Activated CD8-positive, alpha-beta T cell treated with anti-CD3 and anti-CD28 coated beads, Interleukin-2, amount 10 ng/mL, durations not matched to agents 7 days and 5 days (primary cell): ENCODE measurements at regions of chr11 and their contacts with region 1.

Region 1: GRCh38 chr11:11028017-11028692 is 170.3 kb upstream of the ZBED5 start:
- DNase-seq: peak; percentile 84
- ATAC-seq: peak; percentile 91
- H3K4me3 Mint-ChIP-seq: no peak overlapping the region
- H3K27ac Mint-ChIP-seq: no peak overlapping the region
- H3K4me1 Mint-ChIP-seq: no peaks in the 10 kb centered on the region
- H3K27me3 Mint-ChIP-seq: peaks cover 19% of the 10 kb centered on the region

Region 2: DNA sequence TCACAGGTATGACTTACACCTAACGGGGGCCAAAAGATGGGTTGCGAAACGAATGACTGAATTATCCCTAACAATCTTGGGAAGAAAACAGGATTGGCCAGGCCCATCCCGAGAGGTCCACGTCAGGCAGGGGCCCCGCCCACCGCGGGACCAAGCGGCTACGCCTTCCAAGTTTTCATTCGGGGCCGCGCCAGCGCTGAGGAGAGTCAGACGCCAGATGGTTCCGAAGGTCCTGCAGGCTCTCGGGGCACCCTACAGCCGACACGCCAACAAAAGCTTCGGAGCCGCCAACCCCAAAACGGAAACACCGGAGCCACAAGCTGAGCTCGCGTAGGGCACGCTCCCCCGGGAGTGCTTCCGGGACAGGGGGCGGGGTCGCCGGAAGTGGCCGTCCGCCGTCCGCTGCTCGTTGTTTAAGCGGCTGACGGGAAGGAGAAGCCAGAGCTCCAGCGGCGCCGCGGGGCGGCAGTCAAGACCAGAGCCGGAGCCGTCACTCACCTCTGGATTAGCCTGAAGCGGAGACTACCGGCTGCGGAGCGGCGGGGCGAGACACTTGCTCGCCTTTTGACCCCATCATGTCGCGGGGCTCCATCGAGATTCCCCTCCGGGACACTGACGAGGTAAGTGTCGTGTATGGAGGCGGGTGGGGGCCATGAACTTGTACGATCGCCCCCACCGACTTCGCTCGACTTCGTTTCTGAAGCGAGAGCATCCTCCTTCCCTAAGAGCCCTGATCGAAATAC is 277.1 kb before region 1 on chr11 and contains the start of gene CTR9:
- CTCF ChIA-PET with region 1: no interaction called
- POLR2A ChIA-PET with region 1: no interaction called
- DNase-seq: peak; percentile 94
- ATAC-seq: peak; percentile 90
- H3K4me3 Mint-ChIP-seq: peak within 1 kb of the TSS; percentile 95
- H3K27ac Mint-ChIP-seq: peak within 1 kb of the TSS; percentile 89
- H3K4me1 Mint-ChIP-seq: peaks cover 31% of the 10 kb centered on the region
- H3K27me3 Mint-ChIP-seq: no peaks in the 10 kb centered on the region
- total RNA-seq, gene CTR9: 43.4 to 44.0 TPM

Region 3: GRCh38 chr11:10933455-10934292 is 94.5 kb before region 1 on chr11:
- CTCF ChIA-PET with region 1: interaction called, 38 read pairs
- POLR2A ChIA-PET with region 1: no interaction called
- DNase-seq: peak; percentile 85
- ATAC-seq: peak; percentile 79
- H3K4me3 Mint-ChIP-seq: peak overlapping the region; percentile 70
- H3K27ac Mint-ChIP-seq: no peak overlapping the region
- H3K4me1 Mint-ChIP-seq: peaks cover 18% of the 10 kb centered on the region
- H3K27me3 Mint-ChIP-seq: peaks cover 43% of the 10 kb centered on the region

Region 4: GRCh38 chr11:11016068-11016467 is 12.1 kb before region 1 on chr11:
- CTCF ChIA-PET with region 1: interaction called, 14 read pairs
- POLR2A ChIA-PET with region 1: interaction called, 3 read pairs
- DNase-seq: no peak
- ATAC-seq: no peak
- H3K4me3 Mint-ChIP-seq: no peak overlapping the region
- H3K27ac Mint-ChIP-seq: no peak overlapping the region
- H3K4me1 Mint-ChIP-seq: no peaks in the 10 kb centered on the region
- H3K27me3 Mint-ChIP-seq: peaks cover 27% of the 10 kb centered on the region

Region 5: DNA sequence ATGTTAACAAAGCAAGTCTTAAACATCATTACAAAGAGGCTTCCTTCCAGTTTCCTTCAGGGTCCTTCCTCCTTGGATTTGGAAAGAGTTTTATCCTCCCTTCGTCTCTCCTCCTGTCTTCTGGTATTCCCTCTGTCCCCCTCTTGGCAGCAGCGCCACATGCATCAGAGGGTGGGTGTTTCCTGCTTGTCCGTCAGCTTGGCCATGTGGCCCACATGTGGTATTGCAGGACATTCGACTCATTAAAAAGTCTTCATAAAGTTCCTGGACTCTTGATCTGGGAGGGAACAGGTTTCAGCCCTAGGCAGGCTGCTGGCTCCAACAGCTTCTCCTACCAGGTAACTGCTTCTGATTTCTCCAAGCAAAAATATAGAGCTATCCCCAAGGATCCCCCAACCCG is 135.1 kb after region 1 on chr11:
- CTCF ChIA-PET with region 1: interaction called, 51 read pairs
- POLR2A ChIA-PET with region 1: no interaction called
- DNase-seq: no peak
- ATAC-seq: no peak
- H3K4me3 Mint-ChIP-seq: no peak overlapping the region
- H3K27ac Mint-ChIP-seq: no peak overlapping the region
- H3K4me1 Mint-ChIP-seq: no peaks in the 10 kb centered on the region
- H3K27me3 Mint-ChIP-seq: peaks cover 23% of the 10 kb centered on the region

Region 6: DNA sequence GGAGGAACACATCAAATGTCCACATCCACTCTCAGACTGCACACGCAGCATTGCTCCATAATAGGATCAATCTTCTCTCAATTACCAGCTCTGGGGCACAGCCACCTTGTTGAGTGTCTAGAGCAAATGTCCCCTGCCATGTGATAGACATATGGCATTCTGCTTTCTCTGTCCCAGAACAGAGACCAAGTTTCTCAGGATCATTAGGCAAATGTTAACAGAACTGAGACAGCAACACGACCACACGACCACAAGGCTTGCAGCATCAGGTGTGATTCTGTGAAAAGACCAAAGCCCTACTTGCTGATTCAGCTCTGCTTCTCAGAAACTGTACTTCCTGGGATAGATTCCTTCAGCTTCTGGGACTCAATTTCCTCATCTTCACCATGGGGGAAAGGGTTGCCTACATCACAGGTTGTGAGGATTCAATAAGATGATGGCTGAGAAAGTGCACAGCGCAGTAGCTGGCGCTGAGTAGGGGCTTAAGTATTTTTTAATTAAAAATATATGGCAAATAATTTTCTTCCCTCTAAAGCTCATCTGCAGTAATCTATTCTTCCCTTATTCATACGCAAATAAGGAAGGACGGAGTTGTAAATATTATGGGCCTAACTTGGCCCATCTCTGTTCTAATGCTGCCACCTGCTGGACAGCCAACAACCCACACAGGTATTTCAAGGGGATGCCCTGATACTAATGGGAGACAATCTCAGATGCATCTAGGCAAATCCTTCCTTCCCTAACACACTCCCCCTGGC is 759.3 kb after region 1 on chr11:
- CTCF ChIA-PET with region 1: interaction called, 43 read pairs
- POLR2A ChIA-PET with region 1: no interaction called
- DNase-seq: peak; percentile 77
- ATAC-seq: peak; percentile 82
- H3K4me3 Mint-ChIP-seq: no peak overlapping the region
- H3K27ac Mint-ChIP-seq: no peak overlapping the region
- H3K4me1 Mint-ChIP-seq: peaks cover 3% of the 10 kb centered on the region
- H3K27me3 Mint-ChIP-seq: peaks cover 4% of the 10 kb centered on the region